Breast epithelium (tissue), 4 donors: ENCODE measurements at regions of chr19 and their contacts with region 1.

Region 1: GRCh38 chr19:36850559-36851442 is at the start of gene ZNF345:
- DNase-seq: peak; percentile 87 to 91
- H3K4me3 ChIP-seq: peak within 1 kb of the TSS; percentile 72 to 84 (median 79)
- H3K27ac ChIP-seq: peak within 1 kb of the TSS; percentile 92 to 94
- H3K4me1 ChIP-seq: no peaks in the 10 kb centered on the region
- H3K27me3 ChIP-seq: no peaks in the 10 kb centered on the region
- CTCF ChIP-seq: no peak
- POLR2A ChIP-seq: peak; percentile 32
- total RNA-seq, gene ZNF345: 8.6 to 13.6 (median 10.2) TPM

Region 2: DNA sequence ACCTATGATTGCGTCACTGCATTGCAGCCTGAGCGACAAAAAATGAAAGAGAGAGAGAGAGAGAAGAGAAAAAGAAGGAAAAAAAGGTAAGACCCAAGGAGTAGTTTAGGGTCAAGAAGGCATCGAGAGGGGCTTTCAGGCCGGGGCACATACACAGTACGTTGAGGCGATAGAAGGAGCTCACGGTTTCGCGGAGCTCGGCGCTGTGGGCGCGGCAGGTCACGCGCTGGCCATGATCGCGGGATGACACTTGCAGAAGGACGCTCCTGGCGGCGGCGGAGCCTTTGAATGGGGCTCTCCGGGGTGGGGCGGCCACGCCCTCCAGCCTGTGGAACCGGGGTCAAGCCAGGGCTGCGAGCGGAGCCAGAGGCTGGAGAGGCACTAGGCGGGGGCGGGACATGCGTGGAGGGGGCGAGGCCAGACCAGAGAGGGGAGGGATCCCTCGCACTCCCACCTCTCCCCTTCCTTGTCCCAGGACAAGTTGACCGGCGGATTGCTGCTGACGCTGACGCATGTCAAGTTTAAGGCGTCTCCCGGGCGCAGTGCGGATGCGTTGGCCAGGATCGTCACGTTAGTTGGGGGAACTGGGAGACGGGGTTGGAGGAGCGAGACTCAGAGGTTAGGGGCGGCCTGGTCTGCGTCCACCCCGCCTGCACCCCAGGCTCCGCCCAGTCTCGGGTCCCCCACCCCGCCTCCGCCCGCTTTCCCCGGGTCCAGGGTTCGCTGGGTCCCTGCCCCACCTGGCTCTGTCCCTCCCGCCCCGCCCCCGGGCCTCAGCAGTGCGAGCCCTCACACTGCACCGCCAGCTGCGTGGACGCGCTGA is 1005.4 kb before region 1 on chr19:
- intact Hi-C with region 1: loop called (anchors 5 kb)
- DNase-seq: no peak
- H3K4me3 ChIP-seq: peak overlapping the region in 2 of 3 donors; percentile 42 to 60
- H3K27ac ChIP-seq: no peak overlapping the region
- H3K4me1 ChIP-seq: no peaks in the 10 kb centered on the region
- H3K27me3 ChIP-seq: peaks cover 3 to 70% of the 10 kb centered on the region in 2 donors
- CTCF ChIP-seq: no peak
- POLR2A ChIP-seq: no peak

Region 3: DNA sequence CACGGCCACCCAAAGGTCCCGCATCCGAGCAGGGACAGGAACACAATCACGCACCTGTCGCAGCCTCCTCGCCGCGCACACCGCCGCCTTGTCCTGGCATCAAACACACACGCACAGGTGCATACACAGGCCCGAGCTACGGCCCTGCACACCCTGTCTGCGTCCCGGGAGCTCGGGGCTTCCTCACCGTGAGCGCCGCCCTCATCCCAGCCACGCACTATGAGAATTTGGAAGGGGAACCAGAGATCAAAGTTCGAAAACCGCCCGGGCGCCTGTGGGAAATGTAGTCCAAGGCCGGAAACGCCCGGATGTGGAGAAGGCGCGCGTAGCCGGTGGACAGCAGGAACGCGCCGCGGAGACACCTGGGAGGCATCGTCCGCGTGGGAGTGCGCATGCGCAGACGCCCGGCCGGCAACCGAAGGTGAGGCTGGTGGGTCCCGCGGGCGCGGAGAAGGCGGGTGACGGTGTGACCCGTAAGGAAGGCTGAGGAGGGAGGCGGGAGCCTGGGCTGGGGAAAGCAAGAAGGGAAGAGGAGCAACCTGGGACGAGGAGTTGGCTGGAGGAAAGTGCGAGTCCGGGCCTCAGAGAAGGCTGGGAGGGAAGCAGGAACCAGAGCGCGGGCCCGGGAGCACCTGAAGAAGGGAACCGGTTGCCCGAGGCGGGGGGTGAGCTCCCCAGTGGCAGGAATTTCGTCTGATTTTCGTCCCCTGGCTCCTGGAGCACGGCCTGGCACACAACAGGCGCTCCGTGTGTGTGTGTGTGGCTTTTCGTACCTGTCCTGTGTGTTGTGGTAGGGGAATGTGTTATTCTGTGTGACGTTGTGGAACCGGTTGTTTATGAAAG is 163.4 kb before region 1 on chr19 and contains the start of gene ZNF567:
- intact Hi-C with region 1: no loop called
- DNase-seq: peak; percentile 97 to 98
- H3K4me3 ChIP-seq: peak within 1 kb of the TSS; percentile 70 to 87 (median 81)
- H3K27ac ChIP-seq: peak within 1 kb of the TSS; percentile 73 to 87
- H3K4me1 ChIP-seq: peaks cover 0 to 4% of the 10 kb centered on the region in 2 donors
- H3K27me3 ChIP-seq: no peaks in the 10 kb centered on the region
- CTCF ChIP-seq: no peak
- POLR2A ChIP-seq: peak; percentile 29
- total RNA-seq, gene ZNF567: 3.8 to 20.6 (median 15.1) TPM